ENCODE measurements at regions of chr1 and their contacts with region 1.

Region 1: GRCh38 chr1:46527474-46528296 is 23.8 kb downstream of the KNCN start:
- DNase-seq: peak; percentile 67
- H3K4me3 ChIP-seq: no peak overlapping the region
- H3K27ac ChIP-seq: no peak overlapping the region
- H3K4me1 ChIP-seq: no peaks in the 10 kb centered on the region
- H3K27me3 ChIP-seq: peaks cover 52 to 57% of the 10 kb centered on the region in 2 experiments
- CTCF ChIP-seq: peak; percentile 90 to 95
- POLR2A ChIP-seq: no peak

Region 2: DNA sequence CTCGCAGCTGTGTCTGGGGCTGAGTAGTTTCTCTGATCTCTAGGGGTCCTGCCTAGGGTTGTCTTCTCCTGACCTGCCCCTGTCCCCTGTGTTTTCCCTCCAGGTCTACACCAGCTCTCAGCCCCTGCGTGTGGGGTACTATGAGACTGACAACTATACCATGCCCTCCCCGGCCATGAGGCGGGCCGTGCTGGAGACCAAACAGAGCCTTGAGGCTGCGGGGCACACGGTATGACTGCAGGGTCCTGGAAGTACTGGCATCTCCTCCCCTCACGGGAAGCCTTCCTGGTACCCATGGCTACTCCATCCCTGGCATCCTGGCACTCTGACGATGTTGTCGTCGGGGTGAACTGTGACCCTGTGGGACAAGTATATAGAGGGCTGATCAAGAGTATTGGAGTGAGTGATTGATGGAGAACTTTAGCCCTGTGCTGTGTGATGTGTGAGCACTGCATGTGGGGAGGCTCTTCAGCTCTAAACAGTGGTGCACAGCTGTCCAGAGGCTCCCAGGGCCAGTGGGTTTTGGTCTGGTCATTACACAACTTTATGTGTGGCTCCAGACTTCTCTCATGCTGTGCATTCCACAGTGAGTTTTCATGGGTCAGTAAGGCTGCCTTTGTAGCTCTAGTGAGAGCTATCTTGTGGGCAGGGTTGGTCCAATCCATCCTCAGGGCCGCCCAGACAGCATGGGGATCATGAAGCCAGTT is 119.2 kb before region 1 on chr1:
- CTCF ChIA-PET with region 1: interaction called, 53 read pairs
- POLR2A ChIA-PET with region 1: no interaction called
- dilution Hi-C with region 1: no loop called
- intact Hi-C with region 1: loop called (anchors 1 kb)
- DNase-seq: no peak
- H3K4me3 ChIP-seq: no peak overlapping the region
- H3K27ac ChIP-seq: no peak overlapping the region
- H3K4me1 ChIP-seq: no peaks in the 10 kb centered on the region
- H3K27me3 ChIP-seq: peaks cover 0 to 1% of the 10 kb centered on the region in 2 experiments
- CTCF ChIP-seq: no peak
- POLR2A ChIP-seq: no peak

Region 3: GRCh38 chr1:46477153-46477929 is 50.3 kb before region 1 on chr1:
- CTCF ChIA-PET with region 1: interaction called, 26 read pairs
- POLR2A ChIA-PET with region 1: no interaction called
- dilution Hi-C with region 1: no loop called
- intact Hi-C with region 1: loop called (anchors 1 kb)
- DNase-seq: peak; percentile 63
- H3K4me3 ChIP-seq: no peak overlapping the region
- H3K27ac ChIP-seq: no peak overlapping the region
- H3K4me1 ChIP-seq: no peaks in the 10 kb centered on the region
- H3K27me3 ChIP-seq: peaks cover 36 to 39% of the 10 kb centered on the region in 2 experiments
- CTCF ChIP-seq: peak; percentile 81 to 90
- POLR2A ChIP-seq: no peak

Region 4: DNA sequence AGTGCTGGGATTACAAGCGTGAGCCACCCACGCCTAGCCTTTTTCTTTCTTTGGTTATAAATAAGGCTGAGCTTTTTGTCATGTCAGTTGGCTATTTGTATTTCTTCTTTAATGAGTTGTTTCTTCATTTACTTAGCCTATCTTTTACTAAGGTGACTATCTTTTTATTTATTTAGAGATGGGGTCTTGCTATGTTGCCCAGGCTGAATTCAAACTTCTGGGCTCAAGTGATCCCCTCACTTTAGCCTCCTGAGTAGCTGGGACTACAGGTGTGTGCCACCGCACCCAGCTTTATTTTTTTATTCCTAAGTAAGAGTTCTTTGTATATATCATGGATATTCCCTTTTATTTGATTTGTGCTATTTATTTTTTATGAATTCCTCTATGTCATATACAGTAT is 26.2 kb before region 1 on chr1:
- CTCF ChIA-PET with region 1: no interaction called
- POLR2A ChIA-PET with region 1: no interaction called
- dilution Hi-C with region 1: no loop called
- intact Hi-C with region 1: no loop called
- DNase-seq: no peak
- H3K4me3 ChIP-seq: no peak overlapping the region
- H3K27ac ChIP-seq: no peak overlapping the region
- H3K4me1 ChIP-seq: no peaks in the 10 kb centered on the region
- H3K27me3 ChIP-seq: peaks cover 6 to 22% of the 10 kb centered on the region in 2 experiments
- CTCF ChIP-seq: no peak
- POLR2A ChIP-seq: no peak

Region 5: DNA sequence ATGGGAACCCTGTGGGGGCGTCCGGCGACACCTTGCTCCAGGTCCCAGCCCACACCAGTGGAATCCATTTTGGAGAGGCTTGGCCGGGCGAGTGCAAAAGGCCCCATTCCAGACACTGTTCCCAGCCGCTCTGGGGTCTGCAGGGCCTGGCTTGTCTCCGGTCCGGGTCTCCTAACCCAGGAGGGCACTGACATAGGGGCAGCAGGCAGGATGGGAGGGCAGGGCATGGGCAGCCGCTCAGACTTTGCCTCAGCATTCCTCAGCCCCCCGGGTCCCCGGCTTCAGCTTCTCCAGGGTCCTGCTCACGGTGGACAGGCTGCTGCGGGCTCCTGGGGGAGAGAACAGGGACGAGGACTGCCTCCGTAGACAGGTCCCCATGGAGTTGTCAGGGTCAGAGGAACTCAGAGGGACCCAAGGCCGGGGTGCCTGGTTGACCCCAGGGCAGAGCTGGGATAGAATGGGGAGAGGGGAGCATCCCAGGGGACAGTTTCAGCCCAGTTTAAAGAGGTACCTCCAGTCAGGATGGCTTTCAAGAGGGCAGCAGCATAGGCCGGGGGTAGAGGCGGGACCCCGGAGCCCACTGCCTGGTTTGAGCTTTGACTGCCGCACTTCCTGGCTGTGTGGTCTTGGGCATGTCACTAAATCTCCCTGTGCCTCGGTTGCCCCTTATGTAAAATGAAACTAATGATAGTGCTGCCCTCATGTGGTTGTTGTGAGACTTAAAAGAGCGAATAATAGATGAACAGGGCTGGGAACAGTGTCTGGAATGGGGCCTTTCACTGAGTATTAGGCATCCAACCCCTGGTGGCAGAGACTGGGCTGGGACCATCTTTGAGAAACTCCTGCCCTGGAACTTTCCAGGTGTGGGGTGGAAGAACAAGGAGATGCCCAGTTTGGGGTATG is 20.0 kb after region 1 on chr1:
- CTCF ChIA-PET with region 1: interaction called, 10 read pairs
- POLR2A ChIA-PET with region 1: no interaction called
- dilution Hi-C with region 1: no loop called
- intact Hi-C with region 1: no loop called
- DNase-seq: peak; percentile 48
- H3K4me3 ChIP-seq: no peak overlapping the region
- H3K27ac ChIP-seq: no peak overlapping the region
- H3K4me1 ChIP-seq: no peaks in the 10 kb centered on the region
- H3K27me3 ChIP-seq: peaks cover 45 to 46% of the 10 kb centered on the region in 2 experiments
- CTCF ChIP-seq: peak; percentile 36
- POLR2A ChIP-seq: no peak